AG04449 (cell line): ENCODE measurements at regions of chr2 and their contacts with region 1.

Region 1: GRCh38 chr2:11411768-11412448 is 54.1 kb downstream of the E2F6 start:
- DNase-seq: no peak
- H3K4me3 ChIP-seq: no peak overlapping the region; the same call in 1 of the 2 replicates
- CTCF ChIP-seq: peak; percentile 72

Region 2: DNA sequence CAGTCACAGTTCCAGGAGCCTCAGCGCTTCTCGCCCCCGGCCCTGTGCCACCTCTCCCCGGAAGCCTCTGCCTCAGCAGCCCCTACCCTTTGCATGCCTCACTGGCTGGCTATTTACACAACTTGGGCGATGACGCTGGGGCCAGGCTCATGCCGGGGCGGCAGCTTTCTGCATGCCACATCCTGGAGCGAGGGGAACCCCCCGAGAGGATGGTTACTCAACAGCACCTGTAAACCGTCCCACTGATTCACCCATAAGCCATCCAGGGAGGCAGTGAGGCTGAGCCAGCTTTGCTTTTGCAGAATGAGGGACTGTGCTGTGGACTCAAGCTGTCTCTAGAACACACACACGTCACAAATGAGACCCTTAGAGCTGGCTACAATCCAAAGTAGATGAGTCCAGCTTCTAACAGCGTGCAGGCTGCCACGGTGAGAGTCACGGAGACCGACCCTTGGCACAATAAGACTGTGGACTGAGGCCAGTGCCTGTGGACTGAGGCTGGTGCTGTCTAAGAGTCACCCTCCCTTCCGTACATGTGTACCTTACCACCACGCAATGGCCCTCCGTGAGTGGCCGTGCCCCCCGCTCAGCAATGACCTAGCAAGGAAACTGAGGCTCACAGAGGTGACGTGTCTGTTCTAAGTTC is 918.1 kb before region 1 on chr2:
- CTCF ChIA-PET with region 1: no interaction called
- POLR2A ChIA-PET with region 1: no interaction called
- DNase-seq: no peak
- H3K4me3 ChIP-seq: no peak overlapping the region
- CTCF ChIP-seq: no peak

Region 3: GRCh38 chr2:11224887-11225286 is 187.0 kb before region 1 on chr2:
- CTCF ChIA-PET with region 1: interaction called, 135 read pairs
- POLR2A ChIA-PET with region 1: no interaction called
- DNase-seq: no peak
- H3K4me3 ChIP-seq: no peak overlapping the region
- CTCF ChIP-seq: no peak

Region 4: GRCh38 chr2:11234309-11234708 is 177.6 kb before region 1 on chr2:
- CTCF ChIA-PET with region 1: interaction called, 135 read pairs
- POLR2A ChIA-PET with region 1: no interaction called
- DNase-seq: no peak
- H3K4me3 ChIP-seq: no peak overlapping the region
- CTCF ChIP-seq: peak; percentile 14

Region 5: GRCh38 chr2:11239666-11240462 is 172.0 kb before region 1 on chr2:
- CTCF ChIA-PET with region 1: interaction called, 135 read pairs
- POLR2A ChIA-PET with region 1: no interaction called
- DNase-seq: no peak
- H3K4me3 ChIP-seq: no peak overlapping the region
- CTCF ChIP-seq: no peak

Region 6: GRCh38 chr2:11281186-11281585 is 130.7 kb before region 1 on chr2:
- CTCF ChIA-PET with region 1: no interaction called
- POLR2A ChIA-PET with region 1: no interaction called
- DNase-seq: no peak
- H3K4me3 ChIP-seq: no peak overlapping the region
- CTCF ChIP-seq: no peak

Region 7: GRCh38 chr2:11396467-11397445 is 15.2 kb before region 1 on chr2:
- CTCF ChIA-PET with region 1: interaction called, 20 read pairs
- POLR2A ChIA-PET with region 1: no interaction called
- DNase-seq: no peak
- H3K4me3 ChIP-seq: no peak overlapping the region
- CTCF ChIP-seq: no peak

Region 8: DNA sequence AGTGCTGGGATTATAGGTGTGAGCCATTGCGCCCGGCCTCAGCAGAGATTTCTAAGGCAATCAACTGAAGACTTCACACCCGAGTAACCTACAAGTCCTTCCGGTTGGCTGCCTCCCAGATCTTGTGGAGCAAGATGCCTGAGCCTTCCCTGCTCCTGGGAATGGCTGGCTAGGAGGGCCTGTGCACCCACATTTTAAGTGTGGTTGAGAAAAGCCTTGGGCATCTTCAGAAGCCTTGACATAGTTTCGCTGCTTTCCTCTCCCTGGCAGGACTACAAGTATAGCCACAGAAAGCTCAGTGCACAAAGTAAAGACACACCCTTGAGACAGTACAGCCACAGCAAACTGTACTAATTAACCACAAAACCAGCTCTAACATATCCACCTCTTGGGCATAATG is 18.8 kb after region 1 on chr2:
- CTCF ChIA-PET with region 1: interaction called, 10 read pairs
- POLR2A ChIA-PET with region 1: no interaction called
- DNase-seq: no peak
- H3K4me3 ChIP-seq: no peak overlapping the region
- CTCF ChIP-seq: no peak